MCF 10A (cell line): ENCODE measurements at regions of chr3 and their contacts with region 1.

Region 1: DNA sequence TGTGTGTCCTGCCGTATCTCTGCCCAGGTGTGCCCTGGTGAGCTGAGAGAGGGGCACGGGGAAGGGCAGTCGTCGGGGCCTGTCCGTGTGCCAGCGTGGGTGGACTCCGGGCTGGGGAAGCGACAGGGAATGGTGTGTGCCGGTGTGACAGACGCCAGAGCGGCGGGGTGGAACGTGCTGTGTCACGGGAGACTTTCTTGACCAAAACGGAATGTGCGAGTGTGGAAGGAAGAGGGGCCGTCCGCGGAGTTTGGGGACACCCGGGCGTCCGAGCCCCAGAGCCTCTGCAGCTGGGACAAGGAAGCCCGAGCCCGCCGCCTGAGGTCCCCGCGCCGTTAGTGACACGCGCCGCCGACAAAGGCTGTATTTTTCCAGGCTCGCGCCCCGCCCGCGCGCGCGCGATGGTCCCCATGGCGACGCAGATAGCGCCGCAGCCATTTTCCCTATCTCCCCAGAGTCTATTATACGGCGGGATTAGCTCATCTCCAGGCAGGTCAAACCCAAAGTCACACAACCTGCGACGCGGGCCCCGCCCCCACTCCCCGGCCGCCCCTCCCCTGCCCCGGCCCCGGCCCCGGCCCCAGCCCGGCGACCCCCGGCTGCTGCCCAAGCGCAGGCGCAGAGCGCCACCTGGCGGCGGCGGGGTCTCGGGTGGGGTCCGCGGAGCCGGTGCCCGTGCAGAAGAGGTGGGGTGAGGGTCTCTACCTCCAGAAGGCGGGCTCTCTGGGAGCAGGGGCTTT is 4.6 kb upstream of the GATA2 start:
- DNase-seq: peak; percentile 12
- H3K4me3 Mint-ChIP-seq: peak overlapping the region; percentile 62
- H3K27ac Mint-ChIP-seq: no peak overlapping the region
- H3K4me1 Mint-ChIP-seq: no peaks in the 10 kb centered on the region
- H3K27me3 Mint-ChIP-seq: peaks cover 44% of the 10 kb centered on the region
- CTCF ChIP-seq: peak; percentile 79

Region 2: DNA sequence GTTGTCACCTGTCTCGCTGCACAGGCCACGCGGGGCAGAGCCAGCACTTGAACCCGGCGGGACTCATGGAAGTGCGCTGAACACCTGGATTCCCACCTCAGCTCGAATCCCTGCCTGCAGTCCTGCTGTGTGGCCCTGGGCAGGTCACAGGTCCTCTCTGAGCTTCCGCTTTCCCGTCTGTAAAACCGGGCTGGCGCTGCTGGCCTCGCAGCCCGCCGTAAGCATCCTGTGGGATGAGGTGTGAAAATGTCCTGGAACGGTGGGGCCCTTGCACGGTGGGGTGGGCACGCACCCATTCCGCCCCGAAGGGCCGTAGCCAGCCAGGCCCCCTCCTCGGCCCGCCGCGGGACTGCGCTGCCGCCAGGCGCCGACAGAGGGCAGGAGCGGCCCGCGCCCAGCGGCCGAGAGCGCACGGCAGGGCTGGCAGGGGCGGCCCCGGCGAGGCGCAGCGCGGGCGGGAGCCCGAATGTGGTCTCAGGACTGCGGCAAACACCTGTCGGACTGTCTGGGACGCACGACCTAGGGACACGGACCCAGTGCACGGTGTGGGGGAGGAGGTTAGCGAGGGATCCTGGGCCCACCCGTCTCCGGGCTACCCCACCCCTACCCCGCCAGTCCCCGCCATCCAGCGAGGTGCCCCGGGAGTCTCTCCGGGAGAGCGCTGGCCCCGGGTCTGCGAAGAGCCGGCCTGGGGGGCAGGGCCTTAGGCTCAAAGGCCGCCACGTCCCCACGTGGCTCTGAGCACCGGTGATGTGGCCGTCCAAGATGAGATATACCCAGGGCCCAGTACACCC is 71.2 kb before region 1 on chr3:
- CTCF ChIA-PET with region 1: interaction called, 26 read pairs
- POLR2A ChIA-PET with region 1: no interaction called
- intact Hi-C with region 1: loop called (anchors 1 kb)
- DNase-seq: peak; percentile 30
- H3K4me3 Mint-ChIP-seq: no peak overlapping the region
- H3K27ac Mint-ChIP-seq: no peak overlapping the region
- H3K4me1 Mint-ChIP-seq: no peaks in the 10 kb centered on the region
- H3K27me3 Mint-ChIP-seq: peaks cover 35% of the 10 kb centered on the region
- CTCF ChIP-seq: peak; percentile 92

Region 3: DNA sequence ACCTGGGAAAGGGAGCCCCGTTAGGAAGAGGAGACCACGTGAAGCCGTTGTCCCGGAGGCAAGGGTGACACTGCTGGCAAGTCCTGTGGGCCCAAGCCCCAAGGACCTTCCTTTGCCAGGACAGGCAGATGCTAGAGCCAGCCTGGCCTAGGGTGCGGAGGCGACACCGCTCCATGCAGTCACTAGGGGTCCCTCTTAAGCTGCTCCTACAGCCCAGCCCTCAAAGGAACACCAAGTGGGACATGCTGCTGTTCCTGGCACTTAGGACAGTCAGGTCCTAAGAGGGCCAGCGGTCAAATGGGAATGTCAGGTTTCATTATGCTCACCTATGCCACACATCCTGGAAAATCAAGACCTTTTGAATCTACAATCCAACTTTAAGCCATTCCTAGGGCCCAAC is 93.4 kb after region 1 on chr3:
- CTCF ChIA-PET with region 1: no interaction called
- POLR2A ChIA-PET with region 1: no interaction called
- intact Hi-C with region 1: no loop called
- DNase-seq: no peak
- H3K4me3 Mint-ChIP-seq: no peak overlapping the region
- H3K27ac Mint-ChIP-seq: no peak overlapping the region
- H3K4me1 Mint-ChIP-seq: no peaks in the 10 kb centered on the region
- H3K27me3 Mint-ChIP-seq: no peaks in the 10 kb centered on the region
- CTCF ChIP-seq: no peak